GM12878 (cell line): ENCODE measurements at regions of chr7 and their contacts with region 1.

Region 1: GRCh38 chr7:43439631-43440401 is 143.1 kb upstream of the STK17A start:
- DNase-seq: peak; percentile 13
- ATAC-seq: peak; percentile 97
- H3K4me3 ChIP-seq: no peak overlapping the region
- H3K27ac ChIP-seq: no peak overlapping the region
- H3K4me1 ChIP-seq: no peaks in the 10 kb centered on the region
- H3K27me3 ChIP-seq: no peaks in the 10 kb centered on the region; a peak in 1 of 4 replicates
- CTCF ChIP-seq: peak; percentile 81 to 92 (median 89)
- EP300 ChIP-seq: no peak
- POLR2A ChIP-seq: no peak
- RAD21 ChIP-seq: peak; percentile 66

Region 2: GRCh38 chr7:43417455-43417854 is 22.4 kb before region 1 on chr7:
- CTCF ChIA-PET with region 1: interaction called, 19 read pairs
- POLR2A ChIA-PET with region 1: no interaction called
- RAD21 ChIA-PET with region 1: interaction called, 6 read pairs
- SMC1A ChIA-PET with region 1: no interaction called
- in situ Hi-C with region 1: no loop called
- intact Hi-C with region 1: no loop called
- DNase-seq: no peak
- ATAC-seq: no peak
- H3K4me3 ChIP-seq: no peak overlapping the region
- H3K27ac ChIP-seq: no peak overlapping the region
- H3K4me1 ChIP-seq: no peaks in the 10 kb centered on the region
- H3K27me3 ChIP-seq: no peaks in the 10 kb centered on the region; a peak in 1 of 4 replicates
- CTCF ChIP-seq: no peak
- EP300 ChIP-seq: no peak
- POLR2A ChIP-seq: no peak
- RAD21 ChIP-seq: no peak

Region 3: GRCh38 chr7:43868181-43868580 is 428.4 kb after region 1 on chr7:
- CTCF ChIA-PET with region 1: no interaction called
- POLR2A ChIA-PET with region 1: no interaction called
- RAD21 ChIA-PET with region 1: no interaction called
- SMC1A ChIA-PET with region 1: no interaction called
- in situ Hi-C with region 1: no loop called
- intact Hi-C with region 1: no loop called
- DNase-seq: no peak
- ATAC-seq: no peak
- H3K4me3 ChIP-seq: peak overlapping the region; percentile 92
- H3K27ac ChIP-seq: peak overlapping the region; percentile 27; the same call in 1 of the 2 replicates
- H3K4me1 ChIP-seq: peaks cover 7% of the 10 kb centered on the region
- H3K27me3 ChIP-seq: no peaks in the 10 kb centered on the region
- CTCF ChIP-seq: no peak
- EP300 ChIP-seq: no peak
- POLR2A ChIP-seq: no peak
- RAD21 ChIP-seq: no peak